Ascending aorta (tissue), 2 donors: ENCODE measurements at regions of chr2 and their contacts with region 1.

Region 1: DNA sequence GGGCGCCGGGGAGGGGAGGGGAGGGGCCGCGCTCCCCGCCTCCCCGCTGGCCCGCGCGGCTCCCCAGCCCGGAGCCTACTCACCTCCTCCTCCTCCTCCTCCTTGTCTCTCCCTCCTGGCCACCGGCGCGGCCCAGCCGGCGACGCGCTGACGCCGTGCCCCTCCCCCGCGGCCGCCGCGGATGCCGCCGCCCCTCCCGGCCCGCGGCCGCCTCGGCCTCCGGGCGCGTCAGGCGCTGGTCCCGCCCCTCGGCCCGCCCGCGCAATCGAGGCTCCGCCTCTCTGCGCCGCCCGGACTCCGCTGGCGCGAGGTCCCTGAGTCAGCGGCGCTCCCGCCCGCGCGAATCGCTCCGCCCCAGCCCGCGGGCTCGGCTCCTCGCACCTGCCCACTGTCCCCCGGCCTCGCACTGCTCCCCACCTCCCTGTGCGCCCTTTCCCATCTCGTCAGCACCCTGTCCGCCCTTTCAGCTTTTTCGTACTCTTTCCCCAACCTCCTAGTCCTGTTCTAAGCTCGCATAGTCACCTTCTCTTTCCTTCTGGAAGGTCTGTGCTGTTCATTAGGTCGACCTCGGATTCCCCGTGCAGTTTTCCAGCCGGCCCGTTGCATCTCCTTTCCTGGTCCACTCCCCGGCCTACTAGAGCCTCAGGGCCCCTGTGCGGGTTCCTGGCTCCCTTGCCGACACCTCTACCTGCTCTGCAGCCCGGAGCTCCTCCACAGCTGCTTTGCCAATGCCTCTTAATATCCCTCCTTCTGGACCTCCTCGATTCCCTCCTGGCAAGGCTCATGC is 187.4 kb downstream of the ZEB2 start:
- DNase-seq: peak; percentile 33 to 92
- H3K4me3 ChIP-seq: peak overlapping the region; percentile 66 to 94
- H3K27ac ChIP-seq: peak overlapping the region; percentile 85 to 88
- H3K4me1 ChIP-seq: no peaks in the 10 kb centered on the region
- H3K27me3 ChIP-seq: no peaks in the 10 kb centered on the region
- CTCF ChIP-seq: no peak

Region 2: DNA sequence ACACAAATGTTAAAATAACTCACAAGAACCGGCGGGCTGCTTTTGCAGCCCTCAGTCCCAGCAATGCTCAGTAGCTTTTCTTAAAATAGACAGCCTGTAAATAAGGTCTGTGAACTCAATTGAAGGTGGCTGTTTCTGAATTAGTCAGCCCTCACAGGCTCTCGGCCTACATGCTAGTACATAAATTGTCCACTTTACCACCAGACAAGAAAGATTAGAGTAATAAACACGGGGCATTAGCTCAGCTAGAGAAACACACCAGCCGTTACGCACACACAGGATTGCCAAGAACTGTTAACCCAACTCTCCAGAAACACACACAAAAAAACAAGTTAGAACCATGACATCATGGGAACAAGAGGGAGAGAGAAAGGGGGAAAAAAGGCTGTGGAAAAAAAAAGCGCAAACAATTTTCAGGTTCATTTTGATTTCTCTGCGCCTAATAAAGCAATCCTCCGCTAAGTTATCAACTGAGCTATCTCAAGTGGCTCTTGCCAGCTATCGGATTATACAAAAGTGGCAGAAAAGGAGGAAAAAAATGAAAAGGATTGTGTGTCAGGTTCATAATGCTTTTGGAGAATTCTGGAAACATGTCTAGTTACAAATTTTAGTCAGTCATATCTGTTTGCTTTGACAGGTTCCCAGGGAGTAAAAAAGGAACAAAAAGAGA is 98.3 kb after region 1 on chr2:
- intact Hi-C with region 1: loop called (anchors 2 kb)
- DNase-seq: peak in 1 of 2 donors; percentile 79
- H3K4me3 ChIP-seq: peak overlapping the region; percentile 42 to 60
- H3K27ac ChIP-seq: peak overlapping the region; percentile 73 to 80
- H3K4me1 ChIP-seq: peaks cover 0 to 43% of the 10 kb centered on the region in 2 donors
- H3K27me3 ChIP-seq: no peaks in the 10 kb centered on the region
- CTCF ChIP-seq: no peak

Region 3: GRCh38 chr2:144607891-144608521 is 275.5 kb after region 1 on chr2:
- intact Hi-C with region 1: loop called (anchors 10 kb)
- DNase-seq: no peak
- H3K4me3 ChIP-seq: peak overlapping the region in 1 of 2 donors; percentile 25
- H3K27ac ChIP-seq: peak overlapping the region; percentile 51 to 62
- H3K4me1 ChIP-seq: peaks cover 0 to 6% of the 10 kb centered on the region in 2 donors
- H3K27me3 ChIP-seq: no peaks in the 10 kb centered on the region
- CTCF ChIP-seq: no peak

Region 4: GRCh38 chr2:145016711-145017110 is 684.2 kb after region 1 on chr2:
- intact Hi-C with region 1: loop called (anchors 5 kb)
- DNase-seq: no peak
- H3K4me3 ChIP-seq: no peak overlapping the region
- H3K27ac ChIP-seq: no peak overlapping the region
- H3K4me1 ChIP-seq: peaks cover 0 to 9% of the 10 kb centered on the region in 2 donors
- H3K27me3 ChIP-seq: no peaks in the 10 kb centered on the region
- CTCF ChIP-seq: no peak